Activated naive CD4-positive, alpha-beta T cell treated with anti-CD3 and anti-CD28 coated beads for 36 hours (primary cell): ENCODE measurements at regions of chr2 and their contacts with region 1.

Region 1: GRCh38 chr2:227016894-227017293 is 147.1 kb downstream of the COL4A4 start:
- DNase-seq: no peak
- H3K4me3 Mint-ChIP-seq: no peak overlapping the region
- H3K27ac Mint-ChIP-seq: no peak overlapping the region
- H3K4me1 Mint-ChIP-seq: no peaks in the 10 kb centered on the region
- H3K27me3 Mint-ChIP-seq: peaks cover 8% of the 10 kb centered on the region

Region 2: DNA sequence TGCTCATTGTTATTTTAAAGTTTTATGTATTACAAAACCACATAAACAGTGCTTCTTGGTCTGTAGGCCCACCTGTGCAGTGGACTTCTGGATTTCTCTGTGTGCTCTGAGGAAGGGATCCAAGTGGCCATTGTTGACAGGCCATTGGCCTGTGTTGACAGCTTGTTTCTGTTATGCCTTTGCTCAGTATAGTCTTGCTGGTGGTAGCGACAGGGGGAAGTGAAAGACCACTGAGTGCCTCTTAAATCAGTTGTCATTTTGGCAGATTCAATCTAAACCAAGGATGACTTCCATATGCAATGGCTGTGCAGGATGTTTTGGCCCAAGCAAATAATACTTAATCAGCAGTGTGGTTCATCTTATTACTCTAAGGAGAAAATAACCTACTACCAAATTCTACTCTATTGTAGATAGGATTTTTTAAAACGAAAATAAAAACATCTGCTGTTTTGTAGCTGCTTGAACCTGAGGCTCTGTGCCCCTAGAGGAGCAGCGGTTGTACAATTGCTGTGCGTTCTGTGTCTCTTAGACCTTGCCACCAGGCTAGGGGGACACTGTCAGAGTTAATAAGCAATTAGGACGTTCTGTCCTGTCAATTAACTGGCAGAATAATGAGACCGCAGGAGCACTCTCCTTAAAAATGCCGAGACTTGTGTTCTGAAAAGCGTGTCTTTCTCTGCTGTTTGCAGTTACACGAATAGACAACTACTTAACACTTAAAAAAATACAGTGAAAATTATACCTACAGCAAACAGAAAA is 72.9 kb before region 1 on chr2:
- CTCF ChIA-PET with region 1: no interaction called
- intact Hi-C with region 1: no loop called
- DNase-seq: no peak
- H3K4me3 Mint-ChIP-seq: no peak overlapping the region
- H3K27ac Mint-ChIP-seq: no peak overlapping the region
- H3K4me1 Mint-ChIP-seq: peaks cover 2% of the 10 kb centered on the region
- H3K27me3 Mint-ChIP-seq: no peaks in the 10 kb centered on the region

Region 3: DNA sequence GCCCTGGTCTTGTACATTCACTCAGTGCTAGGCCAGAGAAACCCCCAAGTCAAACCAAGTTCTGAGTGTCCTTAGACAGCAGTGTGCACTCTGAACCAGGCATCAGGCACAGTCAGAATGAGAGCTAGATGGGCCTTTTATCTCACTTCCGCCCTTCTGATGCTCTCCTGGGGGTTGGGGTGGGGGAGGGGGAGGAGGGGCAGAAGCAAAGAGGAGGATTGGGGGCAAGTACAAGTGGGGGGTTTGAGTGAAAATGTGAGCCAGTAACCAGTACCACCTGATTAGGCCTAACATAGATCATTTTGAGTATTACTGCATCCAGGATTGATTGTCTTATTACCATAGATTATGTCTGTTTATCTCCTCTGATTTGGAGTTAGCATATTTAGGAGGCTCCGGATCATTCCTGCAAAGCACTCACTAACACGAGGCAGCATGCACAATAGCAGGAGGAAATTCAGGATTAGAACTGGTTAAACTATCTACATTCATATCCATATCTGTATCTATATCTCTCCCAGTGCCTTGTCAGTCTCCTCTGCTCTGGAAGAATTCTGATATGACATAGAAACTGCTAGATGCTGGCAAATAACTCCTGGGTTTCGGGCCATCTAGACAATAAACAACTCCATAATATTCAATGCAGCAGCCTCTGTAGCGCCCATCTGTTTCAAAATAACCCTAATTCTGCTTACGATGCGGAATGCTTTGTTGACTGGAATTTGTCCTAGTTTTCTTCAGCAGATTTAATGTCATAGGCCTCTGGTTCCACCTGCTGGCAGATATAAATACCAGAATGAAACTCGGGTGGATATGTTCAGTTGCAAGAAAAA is 31.9 kb before region 1 on chr2:
- CTCF ChIA-PET with region 1: no interaction called
- intact Hi-C with region 1: no loop called
- DNase-seq: peak; percentile 45
- H3K4me3 Mint-ChIP-seq: no peak overlapping the region
- H3K27ac Mint-ChIP-seq: no peak overlapping the region
- H3K4me1 Mint-ChIP-seq: peaks cover 19% of the 10 kb centered on the region
- H3K27me3 Mint-ChIP-seq: no peaks in the 10 kb centered on the region

Region 4: DNA sequence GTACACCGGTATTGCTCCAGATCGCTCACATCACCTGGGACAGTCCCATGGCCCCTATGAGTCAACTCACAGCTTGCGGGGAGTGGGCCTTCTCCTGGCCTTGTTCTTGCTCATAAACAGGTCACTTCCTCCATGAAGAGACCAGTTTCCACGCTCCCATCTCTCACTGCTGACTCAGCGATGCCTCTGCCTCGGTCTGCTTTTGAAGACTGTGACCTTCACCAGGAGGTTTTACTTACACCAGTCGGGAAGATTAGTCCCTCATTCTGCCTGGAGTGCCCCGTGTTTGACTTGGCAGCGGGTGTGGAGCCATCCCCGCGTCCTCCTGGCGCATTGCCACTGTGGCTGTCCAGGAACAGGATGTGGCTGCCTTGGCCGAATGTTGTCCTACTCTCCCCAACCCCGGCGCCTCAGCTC is 21.3 kb before region 1 on chr2:
- CTCF ChIA-PET with region 1: no interaction called
- intact Hi-C with region 1: loop called (anchors 2 kb)
- DNase-seq: peak; percentile 81
- H3K4me3 Mint-ChIP-seq: no peak overlapping the region
- H3K27ac Mint-ChIP-seq: peak overlapping the region; percentile 9
- H3K4me1 Mint-ChIP-seq: peaks cover 12% of the 10 kb centered on the region
- H3K27me3 Mint-ChIP-seq: no peaks in the 10 kb centered on the region

Region 5: GRCh38 chr2:227103583-227103982 is 86.7 kb after region 1 on chr2:
- CTCF ChIA-PET with region 1: no interaction called
- intact Hi-C with region 1: no loop called
- DNase-seq: no peak
- H3K4me3 Mint-ChIP-seq: no peak overlapping the region
- H3K27ac Mint-ChIP-seq: no peak overlapping the region
- H3K4me1 Mint-ChIP-seq: no peaks in the 10 kb centered on the region
- H3K27me3 Mint-ChIP-seq: no peaks in the 10 kb centered on the region

Region 6: GRCh38 chr2:227125506-227125905 is 108.6 kb after region 1 on chr2:
- CTCF ChIA-PET with region 1: no interaction called
- intact Hi-C with region 1: no loop called
- DNase-seq: peak; percentile 20
- H3K4me3 Mint-ChIP-seq: no peak overlapping the region
- H3K27ac Mint-ChIP-seq: no peak overlapping the region
- H3K4me1 Mint-ChIP-seq: no peaks in the 10 kb centered on the region
- H3K27me3 Mint-ChIP-seq: peaks cover 13% of the 10 kb centered on the region